OCI-LY7 (cell line): ENCODE measurements at regions of chr3 and their contacts with region 1.

Region 1: GRCh38 chr3:105868742-105869530 is at the start of gene CBLB:
- DNase-seq: peak; percentile 90
- H3K4me3 ChIP-seq: peak within 1 kb of the TSS; percentile 98
- H3K27ac ChIP-seq: peak within 1 kb of the TSS; percentile 62
- H3K4me1 ChIP-seq: peaks cover 41% of the 10 kb centered on the region
- CTCF ChIP-seq: no peak
- total RNA-seq, gene CBLB: 24.5 and 57.7 TPM in 2 replicates

Region 2: GRCh38 chr3:105686278-105686897 is 182.5 kb before region 1 on chr3:
- CTCF ChIA-PET with region 1: interaction called, 3 read pairs
- POLR2A ChIA-PET with region 1: no interaction called
- intact Hi-C with region 1: loop called (anchors 2 kb)
- DNase-seq: peak; percentile 46
- H3K4me3 ChIP-seq: no peak overlapping the region
- H3K27ac ChIP-seq: no peak overlapping the region
- H3K4me1 ChIP-seq: no peaks in the 10 kb centered on the region
- CTCF ChIP-seq: peak; percentile 98

Region 3: DNA sequence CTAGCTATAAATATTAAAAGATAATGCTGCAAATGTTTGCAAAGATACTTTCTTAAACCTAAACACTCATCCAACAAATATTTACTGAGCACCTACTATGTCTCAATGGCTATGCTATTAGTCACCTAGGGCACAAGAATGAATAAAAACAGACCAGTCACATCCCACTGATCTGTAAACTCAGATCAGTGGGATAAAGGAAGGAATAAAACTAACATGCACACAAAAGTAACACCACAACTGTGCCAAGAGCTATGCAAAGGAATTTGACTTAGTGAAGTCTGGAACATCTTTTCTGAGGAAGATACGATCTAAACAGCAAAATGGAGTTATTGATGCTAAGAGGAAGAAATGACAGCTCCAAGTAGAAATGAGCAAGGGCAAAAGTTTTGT is 56.7 kb before region 1 on chr3:
- CTCF ChIA-PET with region 1: no interaction called
- POLR2A ChIA-PET with region 1: interaction called, 6 read pairs
- intact Hi-C with region 1: loop called (anchors 5 kb)
- DNase-seq: no peak
- H3K4me3 ChIP-seq: no peak overlapping the region
- H3K27ac ChIP-seq: no peak overlapping the region
- H3K4me1 ChIP-seq: peaks cover 37% of the 10 kb centered on the region
- CTCF ChIP-seq: no peak

Region 4: DNA sequence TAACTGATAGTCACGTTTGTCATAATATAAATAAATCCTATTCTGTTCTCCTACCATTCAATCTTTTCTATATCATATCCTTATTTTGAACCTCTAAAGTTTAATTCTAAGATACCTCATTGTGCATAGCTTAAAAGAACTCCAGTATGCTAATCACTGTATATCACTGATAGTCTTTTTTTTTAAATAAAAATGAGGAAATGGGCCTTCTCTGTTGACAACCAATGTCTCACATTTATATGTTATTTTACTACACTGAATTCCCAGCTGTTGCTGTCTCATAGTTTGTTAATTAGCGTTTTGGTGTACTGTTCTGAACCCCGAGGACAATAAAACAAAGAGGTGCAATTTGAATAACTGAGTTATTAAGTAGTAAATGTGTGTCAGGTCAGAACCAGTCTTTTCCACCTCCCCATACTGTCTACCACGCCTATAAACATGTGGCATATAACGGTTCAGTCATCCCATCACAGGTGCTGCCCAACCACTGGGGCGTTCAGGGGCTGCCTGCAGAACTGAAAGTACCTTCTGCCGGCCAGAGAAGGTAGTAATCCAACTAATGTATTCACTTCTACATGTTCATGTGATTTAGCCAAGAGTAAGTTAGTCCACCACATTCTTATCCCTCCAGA is 15.0 kb before region 1 on chr3:
- CTCF ChIA-PET with region 1: no interaction called
- POLR2A ChIA-PET with region 1: interaction called, 10 read pairs
- intact Hi-C with region 1: no loop called
- DNase-seq: peak; percentile 95
- H3K4me3 ChIP-seq: peak overlapping the region; percentile 32
- H3K27ac ChIP-seq: peak overlapping the region; percentile 93
- H3K4me1 ChIP-seq: peaks cover 57% of the 10 kb centered on the region
- CTCF ChIP-seq: no peak

Region 5: GRCh38 chr3:106068795-106069194 is 199.9 kb after region 1 on chr3:
- CTCF ChIA-PET with region 1: no interaction called
- POLR2A ChIA-PET with region 1: no interaction called
- intact Hi-C with region 1: no loop called
- DNase-seq: no peak
- H3K4me3 ChIP-seq: no peak overlapping the region
- H3K27ac ChIP-seq: no peak overlapping the region
- H3K4me1 ChIP-seq: no peaks in the 10 kb centered on the region
- CTCF ChIP-seq: no peak